BJ (cell line): ENCODE measurements at regions of chr18 and their contacts with region 1.

Region 1: GRCh38 chr18:36381075-36381474 is 83.6 kb downstream of the FHOD3 start:
- DNase-seq: no peak
- H3K4me3 ChIP-seq: no peak overlapping the region
- H3K27me3 ChIP-seq: no peaks in the 10 kb centered on the region
- CTCF ChIP-seq: no peak

Region 2: DNA sequence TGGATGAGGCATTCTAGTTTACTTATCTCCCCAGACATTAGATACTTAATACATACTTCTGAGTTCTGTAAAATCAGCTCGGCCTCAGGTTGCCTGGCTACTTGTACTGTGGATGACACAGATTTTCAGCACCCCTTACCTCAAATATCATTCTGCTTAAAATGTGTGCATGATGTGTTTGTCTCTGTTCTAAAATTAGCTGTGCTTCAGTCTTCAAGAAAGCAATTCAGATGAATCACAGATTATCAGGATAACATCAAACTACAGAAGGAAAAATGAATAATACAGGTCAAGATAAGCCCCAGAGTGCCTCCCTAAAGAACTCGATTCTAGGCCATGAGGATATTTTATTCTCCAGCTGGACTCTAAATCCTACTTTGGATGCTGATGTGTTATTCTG is 1361.1 kb before region 1 on chr18:
- CTCF ChIA-PET with region 1: no interaction called
- POLR2A ChIA-PET with region 1: no interaction called
- DNase-seq: no peak
- H3K4me3 ChIP-seq: no peak overlapping the region
- H3K27me3 ChIP-seq: no peaks in the 10 kb centered on the region; the same call in 1 of the 2 replicates
- CTCF ChIP-seq: no peak

Region 3: DNA sequence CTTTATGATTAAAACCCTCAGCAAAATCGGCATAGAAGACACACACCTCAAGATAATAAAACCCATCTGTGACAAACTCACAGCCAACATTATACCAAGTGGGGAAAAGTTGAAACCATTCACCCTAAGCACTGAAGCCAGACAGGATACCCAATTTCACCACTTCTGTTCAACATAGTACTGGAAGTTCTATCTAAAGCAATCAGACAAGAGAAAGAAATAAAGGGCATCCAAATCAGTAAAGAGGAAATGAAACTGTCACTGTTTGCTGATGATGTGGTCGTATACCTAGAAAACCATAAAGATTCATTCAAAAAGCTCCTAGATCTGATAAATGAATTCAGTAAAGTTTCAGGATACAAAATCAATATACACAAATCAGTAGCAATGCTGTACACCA is 297.3 kb before region 1 on chr18:
- CTCF ChIA-PET with region 1: no interaction called
- POLR2A ChIA-PET with region 1: no interaction called
- DNase-seq: no peak
- H3K4me3 ChIP-seq: no peak overlapping the region
- H3K27me3 ChIP-seq: no peaks in the 10 kb centered on the region
- CTCF ChIP-seq: no peak

Region 4: GRCh38 chr18:36095936-36096519 is 285.0 kb before region 1 on chr18:
- CTCF ChIA-PET with region 1: no interaction called
- POLR2A ChIA-PET with region 1: interaction called, 10 read pairs
- DNase-seq: peak; percentile 18
- H3K4me3 ChIP-seq: no peak overlapping the region
- H3K27me3 ChIP-seq: no peaks in the 10 kb centered on the region
- CTCF ChIP-seq: peak; percentile 41

Region 5: DNA sequence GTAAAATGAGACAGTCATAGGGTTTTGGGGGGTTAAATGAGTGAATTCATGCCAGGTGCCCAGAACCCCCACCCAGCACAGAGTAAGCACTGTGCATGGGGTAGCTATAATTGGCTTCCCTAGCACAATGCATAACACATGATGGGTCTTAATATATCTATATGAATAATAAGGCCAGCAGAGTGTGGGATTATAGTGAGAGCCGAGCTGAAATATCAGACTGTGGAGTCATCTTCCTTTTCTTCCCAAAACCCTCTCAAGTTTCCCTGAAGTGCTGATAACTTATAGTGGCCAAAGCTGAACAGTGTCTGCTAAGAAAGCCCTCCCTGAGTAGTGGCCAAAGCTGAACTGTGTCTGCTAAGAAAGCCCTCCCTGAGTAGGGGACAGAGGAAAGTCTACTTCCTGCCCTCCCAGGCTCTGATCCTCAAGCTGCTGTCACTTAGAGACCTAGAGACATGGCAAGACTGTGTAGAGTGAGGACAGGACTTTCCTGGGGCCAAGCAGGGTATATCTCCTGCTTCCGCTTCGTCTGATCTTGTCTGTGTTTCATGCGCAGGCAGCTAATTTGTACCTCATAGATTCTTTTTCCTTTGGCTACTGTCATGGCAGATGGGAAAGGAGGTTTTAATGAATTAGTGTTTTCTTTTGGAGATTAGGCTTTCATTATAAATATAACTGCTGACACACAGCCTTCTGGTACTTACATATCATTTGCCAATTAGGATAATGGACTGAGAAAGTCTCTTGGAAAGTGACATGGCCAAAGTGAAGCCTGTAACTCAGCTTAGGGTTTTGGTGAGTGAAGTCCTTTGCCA is 11.3 kb after region 1 on chr18:
- CTCF ChIA-PET with region 1: no interaction called
- POLR2A ChIA-PET with region 1: no interaction called
- DNase-seq: no peak
- H3K4me3 ChIP-seq: no peak overlapping the region
- H3K27me3 ChIP-seq: no peaks in the 10 kb centered on the region
- CTCF ChIP-seq: no peak

Region 6: GRCh38 chr18:36485772-36486171 is 104.7 kb after region 1 on chr18:
- CTCF ChIA-PET with region 1: no interaction called
- POLR2A ChIA-PET with region 1: no interaction called
- DNase-seq: no peak
- H3K4me3 ChIP-seq: no peak overlapping the region
- H3K27me3 ChIP-seq: no peaks in the 10 kb centered on the region
- CTCF ChIP-seq: no peak